Naive thymus-derived CD4-positive, alpha-beta T cell (primary cell): ENCODE measurements at regions of chr4 and their contacts with region 1.

Region 1: GRCh38 chr4:71184195-71184781 is 154.5 kb upstream of the SLC4A4 start:
- DNase-seq: peak in 5 of 9 donors; percentile 20 to 43 (median 32)
- ATAC-seq: peak; percentile 57
- H3K4me3 ChIP-seq: no peak overlapping the region
- H3K4me3 Mint-ChIP-seq: no peak overlapping the region
- H3K27ac ChIP-seq: no peak overlapping the region
- H3K27ac Mint-ChIP-seq: no peak overlapping the region
- H3K4me1 ChIP-seq: peaks cover 4 to 5% of the 10 kb centered on the region in 2 donors
- H3K4me1 Mint-ChIP-seq: peaks cover 13 to 30% (median 25%) of the 10 kb centered on the region in 7 donors
- H3K27me3 ChIP-seq: peaks cover 0 to 14% of the 10 kb centered on the region in 2 donors
- H3K27me3 Mint-ChIP-seq: peaks cover 35 to 53% (median 38%) of the 10 kb centered on the region in 5 donors

Region 2: DNA sequence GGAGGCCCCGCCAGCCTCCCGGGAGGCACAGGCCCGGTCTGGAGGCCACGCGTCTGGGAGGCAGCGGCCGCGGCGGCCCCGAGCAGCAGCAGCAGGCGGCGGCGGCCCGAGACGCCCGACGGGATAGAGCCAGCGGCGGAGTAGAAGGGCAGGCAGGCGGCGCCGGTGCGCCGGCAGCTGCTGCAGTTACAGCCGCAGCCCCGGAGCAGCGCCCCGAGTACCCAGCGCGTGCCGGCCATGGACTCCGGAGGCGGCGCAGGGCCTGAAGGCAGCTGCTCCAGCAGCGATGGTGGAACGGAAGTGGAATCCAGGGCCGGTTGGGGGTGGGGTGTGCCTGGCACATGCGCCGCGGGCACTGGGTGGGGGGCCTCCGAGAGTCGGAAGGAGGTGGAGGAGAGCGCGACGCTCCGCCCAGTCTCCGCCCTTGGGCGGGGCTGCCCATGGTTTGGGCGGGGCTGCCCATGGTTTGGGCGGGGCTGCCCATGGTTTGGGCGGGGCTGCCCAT is 344.6 kb before region 1 on chr4 and contains the start of gene GRSF1:
- CTCF ChIA-PET with region 1: no interaction called
- POLR2A ChIA-PET with region 1: no interaction called
- intact Hi-C with region 1: loop called (anchors 5 kb)
- DNase-seq: peak; percentile 92 to 96 (median 95)
- ATAC-seq: peak; percentile 96
- H3K4me3 ChIP-seq: peak within 1 kb of the TSS; percentile 83
- H3K4me3 Mint-ChIP-seq: peak within 1 kb of the TSS; percentile 89 to 99 (median 97)
- H3K27ac ChIP-seq: peak within 1 kb of the TSS; percentile 88
- H3K27ac Mint-ChIP-seq: peak within 1 kb of the TSS; percentile 91 to 98 (median 96)
- H3K4me1 ChIP-seq: peaks cover 17 to 22% of the 10 kb centered on the region in 2 donors
- H3K4me1 Mint-ChIP-seq: peaks cover 8 to 40% (median 29%) of the 10 kb centered on the region in 7 donors
- H3K27me3 ChIP-seq: no peaks in the 10 kb centered on the region
- H3K27me3 Mint-ChIP-seq: no peaks in the 10 kb centered on the region
- total RNA-seq, gene GRSF1: 35.9 to 76.0 (median 48.0) TPM

Region 3: DNA sequence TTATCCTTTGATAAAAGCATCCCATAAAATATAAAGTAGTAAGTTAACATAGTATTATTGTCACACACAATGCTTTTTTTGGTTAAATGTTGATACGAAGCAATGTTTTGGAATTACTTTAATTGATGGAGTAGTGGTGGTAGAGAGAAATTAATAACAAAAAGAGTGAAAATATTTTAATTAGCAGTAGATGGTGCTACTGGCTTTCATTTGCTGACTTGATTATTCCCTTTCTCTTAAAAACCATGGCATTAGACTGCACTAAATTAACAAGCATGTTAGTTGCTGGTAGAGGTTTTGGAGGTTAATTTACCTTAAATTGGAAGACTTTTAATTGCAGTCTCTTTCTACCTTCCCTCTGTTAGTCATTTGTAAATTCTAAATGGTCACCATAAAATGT is 199.7 kb before region 1 on chr4:
- CTCF ChIA-PET with region 1: no interaction called
- POLR2A ChIA-PET with region 1: no interaction called
- intact Hi-C with region 1: loop called in 1 of 2 experiments (anchors 2 kb)
- DNase-seq: peak in 1 of 9 donors; percentile 38
- ATAC-seq: peak; percentile 49
- H3K4me3 ChIP-seq: no peak overlapping the region
- H3K4me3 Mint-ChIP-seq: no peak overlapping the region
- H3K27ac ChIP-seq: no peak overlapping the region
- H3K27ac Mint-ChIP-seq: no peak overlapping the region
- H3K4me1 ChIP-seq: no peaks in the 10 kb centered on the region
- H3K4me1 Mint-ChIP-seq: no peaks in the 10 kb centered on the region
- H3K27me3 ChIP-seq: no peaks in the 10 kb centered on the region
- H3K27me3 Mint-ChIP-seq: no peaks in the 10 kb centered on the region

Region 4: DNA sequence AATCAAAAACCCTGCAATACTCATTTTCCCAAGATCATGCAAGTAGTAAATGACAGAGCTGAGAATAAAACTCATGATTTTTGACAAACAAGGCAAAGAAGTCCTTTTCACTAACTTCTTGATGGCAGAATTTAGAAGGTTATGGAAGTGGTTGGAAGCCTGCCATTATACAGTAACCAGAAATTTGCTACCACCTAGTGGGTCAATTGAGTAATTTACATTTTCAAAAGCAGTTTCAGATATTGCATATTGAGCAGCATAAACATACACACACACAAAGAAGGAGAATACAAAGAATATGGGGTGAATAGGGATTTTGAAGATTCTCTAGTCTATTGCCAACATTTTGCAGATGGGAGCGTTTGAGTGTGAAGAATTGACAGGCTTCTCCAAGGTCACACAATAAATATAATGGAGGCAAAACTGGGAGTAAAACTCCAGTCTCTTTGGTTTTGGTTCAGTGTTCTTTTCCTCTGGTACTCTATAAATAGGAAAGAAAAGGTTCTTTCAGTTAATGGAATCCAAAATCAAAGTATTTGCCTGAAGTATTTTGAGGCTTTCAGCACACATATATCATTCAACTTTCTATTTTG is 529.4 kb after region 1 on chr4:
- CTCF ChIA-PET with region 1: no interaction called
- POLR2A ChIA-PET with region 1: no interaction called
- intact Hi-C with region 1: loop called (anchors 1 kb)
- DNase-seq: peak in 5 of 9 donors; percentile 7 to 33 (median 10)
- ATAC-seq: no peak
- H3K4me3 ChIP-seq: no peak overlapping the region
- H3K4me3 Mint-ChIP-seq: no peak overlapping the region
- H3K27ac ChIP-seq: no peak overlapping the region
- H3K27ac Mint-ChIP-seq: no peak overlapping the region
- H3K4me1 ChIP-seq: no peaks in the 10 kb centered on the region
- H3K4me1 Mint-ChIP-seq: no peaks in the 10 kb centered on the region
- H3K27me3 ChIP-seq: no peaks in the 10 kb centered on the region
- H3K27me3 Mint-ChIP-seq: no peaks in the 10 kb centered on the region

Region 5: GRCh38 chr4:72302981-72303704 is 1118.9 kb after region 1 on chr4:
- CTCF ChIA-PET with region 1: no interaction called
- POLR2A ChIA-PET with region 1: no interaction called
- intact Hi-C with region 1: loop called (anchors 5 kb)
- DNase-seq: peak in 8 of 9 donors; percentile 9 to 51 (median 32)
- ATAC-seq: peak; percentile 75
- H3K4me3 ChIP-seq: no peak overlapping the region
- H3K4me3 Mint-ChIP-seq: no peak overlapping the region
- H3K27ac ChIP-seq: no peak overlapping the region
- H3K27ac Mint-ChIP-seq: peak overlapping the region in 1 of 9 donors; percentile 0
- H3K4me1 ChIP-seq: no peaks in the 10 kb centered on the region
- H3K4me1 Mint-ChIP-seq: no peaks in the 10 kb centered on the region
- H3K27me3 ChIP-seq: no peaks in the 10 kb centered on the region
- H3K27me3 Mint-ChIP-seq: peaks cover 0 to 3% (median 0%) of the 10 kb centered on the region in 5 donors

Region 6: DNA sequence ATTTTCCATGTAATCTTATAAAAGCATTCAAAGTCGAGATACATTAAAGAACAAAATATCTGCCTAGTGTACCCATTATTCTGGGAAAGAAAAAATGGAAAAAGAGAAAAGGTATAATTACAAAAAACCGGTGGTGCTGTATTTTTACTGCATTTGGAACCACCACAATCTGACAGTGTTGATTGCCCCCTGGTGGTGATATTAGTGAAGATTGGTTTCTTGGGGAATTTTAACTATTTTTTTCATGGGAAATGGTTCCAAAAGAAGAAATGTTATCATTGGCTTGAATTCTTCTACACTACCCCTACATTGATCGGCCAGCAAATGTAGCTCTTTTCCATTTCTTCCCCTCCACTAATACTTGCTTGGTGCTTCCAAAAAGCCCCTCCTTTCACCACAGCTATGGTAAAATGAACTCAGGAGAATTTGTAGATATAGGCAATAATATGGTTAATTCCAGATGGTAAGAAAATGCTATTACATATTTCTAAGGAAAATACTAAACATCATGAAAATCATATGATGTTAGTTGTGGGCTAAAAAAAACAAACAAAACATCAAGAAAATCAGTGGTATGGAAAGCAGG is 1835.3 kb after region 1 on chr4:
- CTCF ChIA-PET with region 1: no interaction called
- POLR2A ChIA-PET with region 1: no interaction called
- intact Hi-C with region 1: loop called in 1 of 2 experiments (anchors 10 kb)
- DNase-seq: peak in 6 of 9 donors; percentile 2 to 33 (median 20)
- ATAC-seq: no peak
- H3K4me3 ChIP-seq: no peak overlapping the region
- H3K4me3 Mint-ChIP-seq: no peak overlapping the region
- H3K27ac ChIP-seq: no peak overlapping the region
- H3K27ac Mint-ChIP-seq: no peak overlapping the region
- H3K4me1 ChIP-seq: no peaks in the 10 kb centered on the region
- H3K4me1 Mint-ChIP-seq: peaks cover 0 to 1% (median 0%) of the 10 kb centered on the region in 7 donors
- H3K27me3 ChIP-seq: no peaks in the 10 kb centered on the region
- H3K27me3 Mint-ChIP-seq: peaks cover 0 to 11% (median 8%) of the 10 kb centered on the region in 5 donors